SK-N-SH (cell line): ENCODE measurements at regions of chr11 and their contacts with region 1.

Region 1: GRCh38 chr11:61332797-61333549 is at the starts of genes DDB1 and TKFC:
- DNase-seq: peak; percentile 99
- H3K4me3 ChIP-seq: peak within 1 kb of the TSS; percentile 92 to 93
- H3K27ac ChIP-seq: peak within 1 kb of the TSS; percentile 74 to 96
- H3K4me1 ChIP-seq: peaks cover 21 to 40% of the 10 kb centered on the region in 2 experiments
- H3K27me3 ChIP-seq: no peaks in the 10 kb centered on the region
- CTCF ChIP-seq: no peak
- EP300 ChIP-seq: no peak
- RAD21 ChIP-seq: no peak
- polyA plus RNA-seq, gene DDB1: 170 and 224 TPM in 2 replicates
- polyA plus RNA-seq, gene TKFC: 71.0 and 72.0 TPM in 2 replicates

Region 2: GRCh38 chr11:61347916-61348461 is 15.0 kb after region 1 on chr11:
- CTCF ChIA-PET with region 1: interaction called, 20 read pairs
- POLR2A ChIA-PET with region 1: interaction called, 6 read pairs
- DNase-seq: no peak
- H3K4me3 ChIP-seq: no peak overlapping the region
- H3K27ac ChIP-seq: no peak overlapping the region; a peak in 1 of 4 replicates
- H3K4me1 ChIP-seq: peaks cover 0 to 29% of the 10 kb centered on the region in 2 experiments; a peak in 1 of 4 replicates
- H3K27me3 ChIP-seq: no peaks in the 10 kb centered on the region
- CTCF ChIP-seq: no peak
- EP300 ChIP-seq: no peak
- RAD21 ChIP-seq: no peak

Region 3: DNA sequence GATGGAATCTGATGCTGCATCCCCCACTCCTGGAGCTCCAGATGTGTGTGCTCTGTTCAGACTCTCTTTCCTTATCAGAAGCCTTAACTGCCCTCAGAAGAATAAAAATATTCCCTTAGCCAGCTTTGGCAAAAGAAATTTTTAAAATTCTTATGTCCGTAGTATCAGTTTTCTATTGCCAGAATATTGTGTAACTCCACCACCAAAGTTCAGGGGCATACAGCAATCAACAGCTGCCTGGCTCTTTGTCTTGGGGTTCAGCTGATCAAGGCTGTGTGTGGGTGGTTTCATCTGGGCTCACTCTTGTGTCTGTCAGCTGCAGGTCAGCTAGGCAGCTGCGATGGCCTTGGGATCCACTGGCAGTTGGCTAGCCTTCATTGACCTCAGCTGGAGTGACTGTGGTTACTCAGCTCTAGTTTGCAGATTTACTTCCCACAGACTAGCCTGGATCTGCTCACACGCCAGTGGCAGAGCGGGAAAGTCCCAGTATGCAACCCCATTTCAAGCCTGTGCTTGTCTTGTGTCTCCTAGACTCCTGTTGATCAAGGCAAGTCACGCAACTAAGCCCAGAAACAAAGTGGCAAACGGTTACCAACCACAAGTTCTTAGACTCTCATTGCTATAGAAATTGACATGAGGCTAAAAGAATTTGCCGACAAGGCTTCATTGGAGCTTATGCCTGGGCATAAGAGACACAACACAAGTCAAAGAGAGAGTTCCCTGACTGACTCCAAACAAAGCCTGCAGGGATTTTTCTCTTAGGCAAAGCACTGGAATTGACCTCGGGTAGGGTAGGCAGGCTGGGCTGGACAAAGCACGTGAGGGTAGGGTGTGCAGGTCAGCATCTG is 36.6 kb after region 1 on chr11:
- CTCF ChIA-PET with region 1: interaction called, 93 read pairs
- POLR2A ChIA-PET with region 1: interaction called, 3 read pairs
- DNase-seq: no peak
- H3K4me3 ChIP-seq: no peak overlapping the region
- H3K27ac ChIP-seq: no peak overlapping the region
- H3K4me1 ChIP-seq: peaks cover 0 to 3% of the 10 kb centered on the region in 2 experiments; a peak in 1 of 4 replicates
- H3K27me3 ChIP-seq: no peaks in the 10 kb centered on the region
- CTCF ChIP-seq: no peak
- EP300 ChIP-seq: no peak
- RAD21 ChIP-seq: no peak

Region 4: DNA sequence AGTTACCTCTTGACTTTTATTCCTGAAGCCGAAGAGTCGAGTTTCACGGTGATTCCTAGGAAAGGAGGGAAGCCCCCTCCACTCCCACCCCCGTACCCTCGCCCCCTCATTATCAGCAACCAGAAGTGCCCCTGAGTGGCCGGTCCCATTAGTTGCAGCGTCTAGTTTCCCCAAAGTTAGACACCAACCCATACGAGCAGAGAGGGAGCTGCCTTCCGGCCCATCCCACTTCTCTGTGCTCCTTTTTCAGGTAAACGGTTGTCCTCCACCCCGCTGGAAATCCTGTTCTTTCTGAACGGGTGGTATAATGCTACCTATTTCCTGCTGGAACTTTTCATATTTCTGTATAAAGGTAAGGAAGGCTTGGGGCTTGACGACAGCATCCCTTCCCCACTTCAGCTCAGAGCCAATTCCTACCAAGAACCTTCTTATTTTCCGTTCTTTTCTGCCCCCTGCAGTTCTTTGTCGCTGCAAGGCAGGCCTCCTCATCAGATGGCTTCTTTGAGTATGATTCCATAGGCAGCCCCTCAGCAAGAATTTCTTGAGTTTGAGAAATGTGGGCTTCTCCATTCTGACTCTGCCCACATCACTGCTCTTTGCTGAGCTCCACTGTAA is 60.1 kb after region 1 on chr11:
- CTCF ChIA-PET with region 1: interaction called, 300 read pairs
- POLR2A ChIA-PET with region 1: interaction called, 6 read pairs
- DNase-seq: peak; percentile 52
- H3K4me3 ChIP-seq: peak overlapping the region; percentile 63 to 70
- H3K27ac ChIP-seq: no peak overlapping the region
- H3K4me1 ChIP-seq: peaks cover 0 to 6% of the 10 kb centered on the region in 2 experiments; a peak in 2 of 4 replicates
- H3K27me3 ChIP-seq: no peaks in the 10 kb centered on the region
- CTCF ChIP-seq: peak; percentile 28
- EP300 ChIP-seq: no peak
- RAD21 ChIP-seq: peak; percentile 52